ENCODE measurements at regions of chr11 and their contacts with region 1.

Region 1: DNA sequence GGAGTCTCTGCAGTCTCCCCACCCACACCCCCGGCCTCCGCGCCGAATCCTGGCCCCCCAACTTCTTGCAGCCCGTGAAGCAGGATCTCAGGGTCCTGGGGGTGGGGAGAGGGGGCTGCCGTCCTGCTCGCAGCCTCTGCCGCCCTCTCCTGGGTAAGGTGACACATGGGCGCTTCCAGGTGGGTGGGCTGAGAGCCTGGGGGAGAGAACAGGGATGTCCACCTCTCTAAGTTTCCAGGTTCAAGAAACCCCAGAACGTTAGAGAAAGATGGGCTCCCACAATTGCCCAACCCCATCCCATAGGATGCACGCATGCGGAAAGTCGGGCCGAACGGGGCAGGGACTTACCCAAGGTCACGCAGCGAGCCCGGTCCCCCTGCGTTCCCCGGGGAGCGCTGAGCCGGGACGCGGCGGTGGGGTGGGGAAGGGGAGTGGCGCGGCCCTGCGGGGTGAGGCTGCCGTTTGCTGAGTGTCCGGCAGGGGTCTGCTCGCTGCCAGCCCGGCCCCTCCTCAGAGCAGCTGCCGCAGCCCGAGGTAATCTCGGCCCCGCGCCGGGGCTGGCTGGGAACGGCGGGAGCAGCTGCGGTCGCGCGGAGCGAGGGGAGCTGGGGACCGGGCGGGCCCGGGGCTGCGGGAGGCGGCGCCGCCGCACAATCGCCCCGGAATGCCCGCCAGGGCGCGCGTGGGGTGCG is 705 bp upstream of the CAPN1 start:
- DNase-seq: peak; percentile 67
- H3K4me3 ChIP-seq: peak overlapping the region; percentile 54 to 86 (median 57)
- H3K27ac ChIP-seq: peak overlapping the region; percentile 23
- H3K4me1 ChIP-seq: peaks cover 9% of the 10 kb centered on the region
- H3K27me3 ChIP-seq: no peaks in the 10 kb centered on the region
- CTCF ChIP-seq: peak; percentile 44 to 68
- POLR2A ChIP-seq: no peak

Region 2: DNA sequence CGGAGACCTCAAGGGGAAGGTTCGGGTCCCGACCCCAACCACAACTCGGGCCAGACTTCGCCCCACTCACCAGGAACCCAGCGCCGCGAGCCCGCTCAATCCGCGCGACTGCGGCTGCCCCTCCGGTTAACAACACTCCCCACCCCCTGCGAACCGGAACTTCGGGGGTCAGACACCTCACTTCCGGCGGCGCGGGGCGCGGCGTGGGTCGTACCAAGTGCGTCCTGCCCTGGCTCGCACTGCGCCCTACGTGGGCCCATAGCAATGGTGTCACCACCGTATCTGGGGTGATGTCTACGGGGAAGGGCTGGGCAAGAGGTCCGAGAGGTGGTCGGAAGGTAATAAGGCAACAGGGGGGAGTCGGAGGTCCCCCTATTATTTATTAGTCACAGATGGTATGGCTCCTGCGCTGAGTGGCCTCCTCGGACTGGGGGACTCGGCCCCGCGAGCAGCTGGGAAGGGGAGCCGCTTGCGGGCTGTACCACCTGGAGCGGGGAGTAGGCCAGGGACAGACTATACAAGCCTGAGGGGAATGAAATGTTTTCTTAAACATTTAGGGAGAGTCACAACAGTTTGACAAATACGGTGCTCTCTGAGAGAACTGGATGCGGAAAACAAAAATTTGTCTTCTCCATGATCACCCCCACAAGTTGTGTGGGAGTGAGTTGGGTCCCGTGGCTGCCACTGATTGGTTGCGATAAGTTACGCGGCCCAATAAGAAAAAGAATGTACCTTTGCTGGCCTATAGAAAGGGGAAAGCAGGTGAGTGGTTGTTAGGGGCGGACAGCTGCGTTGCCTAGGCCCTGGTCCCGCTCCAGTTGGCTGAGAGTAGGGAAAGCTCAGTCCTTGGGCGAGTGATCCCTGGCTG is 46.4 kb before region 1 on chr11 and contains the start of gene SYVN1:
- CTCF ChIA-PET with region 1: interaction called, 27 read pairs
- POLR2A ChIA-PET with region 1: interaction called, 4 read pairs
- dilution Hi-C with region 1: no loop called
- intact Hi-C with region 1: loop called (anchors 1 kb)
- DNase-seq: peak; percentile 97
- H3K4me3 ChIP-seq: peak within 1 kb of the TSS; percentile 51 to 62 (median 52)
- H3K27ac ChIP-seq: peak within 1 kb of the TSS; percentile 89
- H3K4me1 ChIP-seq: peaks cover 12% of the 10 kb centered on the region
- H3K27me3 ChIP-seq: no peaks in the 10 kb centered on the region
- CTCF ChIP-seq: no peak
- POLR2A ChIP-seq: peak; percentile 87
- total RNA-seq, gene SYVN1: 34.5 and 36.0 TPM in 2 replicates

Region 3: DNA sequence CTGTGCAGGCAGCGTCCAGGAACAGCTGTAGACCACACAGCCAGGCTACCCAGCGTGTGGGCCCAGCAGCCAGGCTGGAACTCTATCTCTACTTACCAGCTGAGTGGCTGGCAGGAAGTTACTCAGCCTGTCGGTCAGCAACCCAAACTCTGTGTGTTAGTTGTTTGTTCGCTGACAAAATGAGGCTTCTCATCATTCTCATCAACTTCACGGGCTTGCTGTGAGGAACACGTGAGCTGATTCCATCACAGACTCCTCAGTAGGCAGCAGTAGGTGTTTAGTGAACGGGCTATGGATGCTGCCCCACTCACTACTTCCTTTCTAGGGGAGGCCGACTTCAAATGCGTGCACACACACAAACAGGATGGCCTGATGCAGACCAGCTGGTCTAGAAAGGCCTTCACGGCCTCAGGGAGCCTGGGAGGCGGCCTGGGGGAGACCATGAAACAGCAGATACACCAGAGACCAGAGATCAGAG is 11.8 kb before region 1 on chr11:
- CTCF ChIA-PET with region 1: interaction called, 11 read pairs
- POLR2A ChIA-PET with region 1: interaction called, 3 read pairs
- dilution Hi-C with region 1: no loop called
- intact Hi-C with region 1: no loop called
- DNase-seq: peak; percentile 88
- H3K4me3 ChIP-seq: no peak overlapping the region
- H3K27ac ChIP-seq: peak overlapping the region; percentile 92
- H3K4me1 ChIP-seq: peaks cover 15% of the 10 kb centered on the region
- H3K27me3 ChIP-seq: no peaks in the 10 kb centered on the region
- CTCF ChIP-seq: no peak
- POLR2A ChIP-seq: peak; percentile 69